ENCODE measurements at regions of chr11 and their contacts with region 1.

Region 1: DNA sequence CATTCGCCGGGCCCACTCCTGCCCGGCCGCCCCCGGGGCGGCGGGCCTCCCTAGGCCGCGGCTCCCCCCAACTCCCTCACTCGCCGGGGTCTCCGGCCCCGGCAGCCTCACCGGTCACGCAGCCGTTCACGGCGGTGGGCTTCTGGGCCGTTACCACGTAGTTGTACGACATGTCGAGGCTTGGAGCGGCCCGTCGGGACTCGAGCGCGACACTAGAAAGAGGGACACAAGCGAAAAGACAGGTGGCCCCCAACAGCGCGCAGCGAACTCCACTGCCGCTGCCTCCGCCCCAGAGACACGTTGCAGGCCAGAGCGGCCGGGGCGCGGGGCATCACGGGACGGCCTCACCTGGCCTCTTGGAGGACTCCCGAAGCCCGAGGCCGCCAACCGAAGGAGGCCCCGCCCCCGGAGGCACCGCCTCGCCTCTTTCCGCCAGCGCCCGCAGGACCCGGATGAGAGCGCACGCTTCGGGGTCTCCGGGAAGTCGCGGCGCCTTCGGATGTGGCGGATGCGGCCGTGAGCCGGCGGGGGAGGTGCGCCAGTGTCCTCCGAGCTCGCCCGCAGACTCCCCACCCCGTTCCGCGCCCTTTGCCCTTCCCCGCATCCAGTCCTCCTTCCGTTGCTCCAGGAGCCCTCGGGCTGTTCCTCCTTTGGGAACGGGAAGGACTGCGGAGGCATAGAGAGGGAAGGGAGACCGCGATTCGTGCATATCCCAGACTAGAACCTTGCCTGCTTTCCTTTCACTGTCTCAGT is at the starts of genes DDB1 and TKFC:
- DNase-seq: peak; percentile 97
- H3K4me3 Mint-ChIP-seq: peak within 1 kb of the TSS; percentile 97
- H3K27ac Mint-ChIP-seq: peak within 1 kb of the TSS; percentile 99
- H3K4me1 Mint-ChIP-seq: peaks cover 72% of the 10 kb centered on the region
- H3K27me3 Mint-ChIP-seq: no peaks in the 10 kb centered on the region
- total RNA-seq, gene DDB1: 207 to 222 TPM
- total RNA-seq, gene TKFC: 40.0 to 46.9 TPM

Region 2: DNA sequence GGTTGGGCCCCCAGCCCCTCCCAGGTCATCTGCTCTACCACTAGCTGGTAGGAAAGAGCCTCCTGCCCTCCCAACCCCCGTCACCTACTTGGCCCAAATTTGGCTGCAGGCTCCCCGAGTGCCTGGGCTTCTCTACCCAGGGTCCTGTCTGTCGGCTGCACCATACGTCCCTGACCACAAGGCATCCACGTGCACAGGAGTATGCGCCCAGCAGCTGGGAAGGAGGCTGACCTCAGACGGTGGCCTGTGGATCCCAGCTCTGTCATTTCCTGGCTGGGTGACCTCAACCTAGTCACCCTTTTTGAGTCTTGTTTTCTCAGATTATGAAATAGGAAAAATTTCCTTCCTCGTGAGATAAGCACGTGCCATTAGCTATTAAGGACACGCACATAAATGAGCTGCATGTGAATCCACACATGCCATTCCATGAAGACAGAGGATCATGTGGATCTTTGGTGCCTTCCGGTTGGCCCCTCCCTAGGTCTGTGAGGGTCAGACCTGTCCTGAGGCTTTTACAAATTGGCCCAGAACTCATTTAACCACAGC is 15.0 kb after region 1 on chr11:
- CTCF ChIA-PET with region 1: interaction called, 16 read pairs
- POLR2A ChIA-PET with region 1: interaction called, 5 read pairs
- DNase-seq: no peak
- H3K4me3 Mint-ChIP-seq: no peak overlapping the region
- H3K27ac Mint-ChIP-seq: no peak overlapping the region
- H3K4me1 Mint-ChIP-seq: peaks cover 4% of the 10 kb centered on the region
- H3K27me3 Mint-ChIP-seq: no peaks in the 10 kb centered on the region

Region 3: GRCh38 chr11:61353131-61354067 is 20.4 kb after region 1 on chr11:
- CTCF ChIA-PET with region 1: interaction called, 33 read pairs
- POLR2A ChIA-PET with region 1: interaction called, 5 read pairs
- DNase-seq: no peak
- H3K4me3 Mint-ChIP-seq: no peak overlapping the region
- H3K27ac Mint-ChIP-seq: no peak overlapping the region
- H3K4me1 Mint-ChIP-seq: peaks cover 11% of the 10 kb centered on the region
- H3K27me3 Mint-ChIP-seq: no peaks in the 10 kb centered on the region

Region 4: DNA sequence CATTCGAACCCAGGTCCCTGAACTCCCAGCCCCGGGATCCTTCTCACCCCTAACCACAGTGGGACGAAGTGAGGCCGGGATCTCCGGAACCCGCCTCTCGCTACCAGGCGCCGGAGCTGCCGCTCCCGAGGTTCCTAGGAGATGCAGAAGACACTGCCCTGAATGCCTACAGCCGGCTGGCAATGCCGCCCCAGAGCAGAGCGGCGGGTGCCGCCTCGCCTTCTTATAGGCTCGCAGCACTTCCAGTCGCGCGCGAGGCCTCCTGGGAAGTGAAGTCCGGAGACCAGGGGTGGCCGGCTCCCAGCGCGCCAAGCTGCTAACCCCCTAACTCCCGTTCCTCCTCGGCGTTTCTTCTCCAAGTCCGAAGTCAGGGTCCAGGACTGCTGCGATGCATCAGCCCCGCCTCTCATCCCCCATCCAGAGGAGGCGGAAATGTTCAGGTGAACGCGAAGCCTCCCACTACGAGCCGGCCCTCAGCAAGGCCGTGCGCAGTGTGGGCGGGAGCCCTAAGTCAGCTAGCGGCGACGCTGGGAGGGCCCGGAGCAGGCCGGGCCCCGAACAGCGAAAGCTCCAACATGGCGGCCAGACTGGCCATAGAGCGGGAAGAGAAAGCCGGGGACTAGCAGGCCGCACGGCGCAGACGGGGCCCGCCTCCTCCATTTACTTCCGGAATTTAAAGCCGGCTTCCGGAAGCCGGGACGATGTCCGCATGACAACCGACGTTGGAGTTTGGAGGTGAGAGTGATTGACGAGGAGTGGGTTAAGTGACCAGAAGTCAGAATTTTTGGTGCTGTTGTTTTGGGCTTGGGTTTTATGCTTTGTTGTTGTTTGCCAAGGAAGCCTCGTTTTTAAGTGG is 28.9 kb after region 1 on chr11 and contains the starts of genes CYB561A3 and TMEM138:
- CTCF ChIA-PET with region 1: interaction called, 53 read pairs
- POLR2A ChIA-PET with region 1: interaction called, 8 read pairs
- DNase-seq: peak; percentile 93
- H3K4me3 Mint-ChIP-seq: peak within 1 kb of the TSS; percentile 100
- H3K27ac Mint-ChIP-seq: peak within 1 kb of the TSS; percentile 99
- H3K4me1 Mint-ChIP-seq: peaks cover 45% of the 10 kb centered on the region
- H3K27me3 Mint-ChIP-seq: no peaks in the 10 kb centered on the region
- total RNA-seq, gene CYB561A3: 49.4 to 59.6 TPM
- total RNA-seq, gene TMEM138: 52.0 to 60.4 TPM

Region 5: DNA sequence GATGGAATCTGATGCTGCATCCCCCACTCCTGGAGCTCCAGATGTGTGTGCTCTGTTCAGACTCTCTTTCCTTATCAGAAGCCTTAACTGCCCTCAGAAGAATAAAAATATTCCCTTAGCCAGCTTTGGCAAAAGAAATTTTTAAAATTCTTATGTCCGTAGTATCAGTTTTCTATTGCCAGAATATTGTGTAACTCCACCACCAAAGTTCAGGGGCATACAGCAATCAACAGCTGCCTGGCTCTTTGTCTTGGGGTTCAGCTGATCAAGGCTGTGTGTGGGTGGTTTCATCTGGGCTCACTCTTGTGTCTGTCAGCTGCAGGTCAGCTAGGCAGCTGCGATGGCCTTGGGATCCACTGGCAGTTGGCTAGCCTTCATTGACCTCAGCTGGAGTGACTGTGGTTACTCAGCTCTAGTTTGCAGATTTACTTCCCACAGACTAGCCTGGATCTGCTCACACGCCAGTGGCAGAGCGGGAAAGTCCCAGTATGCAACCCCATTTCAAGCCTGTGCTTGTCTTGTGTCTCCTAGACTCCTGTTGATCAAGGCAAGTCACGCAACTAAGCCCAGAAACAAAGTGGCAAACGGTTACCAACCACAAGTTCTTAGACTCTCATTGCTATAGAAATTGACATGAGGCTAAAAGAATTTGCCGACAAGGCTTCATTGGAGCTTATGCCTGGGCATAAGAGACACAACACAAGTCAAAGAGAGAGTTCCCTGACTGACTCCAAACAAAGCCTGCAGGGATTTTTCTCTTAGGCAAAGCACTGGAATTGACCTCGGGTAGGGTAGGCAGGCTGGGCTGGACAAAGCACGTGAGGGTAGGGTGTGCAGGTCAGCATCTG is 36.6 kb after region 1 on chr11:
- CTCF ChIA-PET with region 1: interaction called, 11 read pairs
- POLR2A ChIA-PET with region 1: no interaction called
- DNase-seq: no peak
- H3K4me3 Mint-ChIP-seq: no peak overlapping the region
- H3K27ac Mint-ChIP-seq: peak overlapping the region; percentile 5
- H3K4me1 Mint-ChIP-seq: peaks cover 12% of the 10 kb centered on the region
- H3K27me3 Mint-ChIP-seq: no peaks in the 10 kb centered on the region

Region 6: GRCh38 chr11:61384271-61385242 is 51.6 kb after region 1 on chr11:
- CTCF ChIA-PET with region 1: interaction called, 88 read pairs
- POLR2A ChIA-PET with region 1: interaction called, 4 read pairs
- DNase-seq: no peak
- H3K4me3 Mint-ChIP-seq: no peak overlapping the region
- H3K27ac Mint-ChIP-seq: no peak overlapping the region
- H3K4me1 Mint-ChIP-seq: peaks cover 5% of the 10 kb centered on the region
- H3K27me3 Mint-ChIP-seq: no peaks in the 10 kb centered on the region

Region 7: DNA sequence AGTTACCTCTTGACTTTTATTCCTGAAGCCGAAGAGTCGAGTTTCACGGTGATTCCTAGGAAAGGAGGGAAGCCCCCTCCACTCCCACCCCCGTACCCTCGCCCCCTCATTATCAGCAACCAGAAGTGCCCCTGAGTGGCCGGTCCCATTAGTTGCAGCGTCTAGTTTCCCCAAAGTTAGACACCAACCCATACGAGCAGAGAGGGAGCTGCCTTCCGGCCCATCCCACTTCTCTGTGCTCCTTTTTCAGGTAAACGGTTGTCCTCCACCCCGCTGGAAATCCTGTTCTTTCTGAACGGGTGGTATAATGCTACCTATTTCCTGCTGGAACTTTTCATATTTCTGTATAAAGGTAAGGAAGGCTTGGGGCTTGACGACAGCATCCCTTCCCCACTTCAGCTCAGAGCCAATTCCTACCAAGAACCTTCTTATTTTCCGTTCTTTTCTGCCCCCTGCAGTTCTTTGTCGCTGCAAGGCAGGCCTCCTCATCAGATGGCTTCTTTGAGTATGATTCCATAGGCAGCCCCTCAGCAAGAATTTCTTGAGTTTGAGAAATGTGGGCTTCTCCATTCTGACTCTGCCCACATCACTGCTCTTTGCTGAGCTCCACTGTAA is 60.1 kb after region 1 on chr11:
- CTCF ChIA-PET with region 1: interaction called, 88 read pairs
- POLR2A ChIA-PET with region 1: interaction called, 4 read pairs
- DNase-seq: no peak
- H3K4me3 Mint-ChIP-seq: peak overlapping the region; percentile 78
- H3K27ac Mint-ChIP-seq: peak overlapping the region; percentile 92
- H3K4me1 Mint-ChIP-seq: peaks cover 25% of the 10 kb centered on the region
- H3K27me3 Mint-ChIP-seq: no peaks in the 10 kb centered on the region

Measured in activated CD4-positive, alpha-beta T cell treated with anti-CD3 and anti-CD28 coated beads, Interleukin-2, amount 10 ng/mL, durations not matched to agents 7 days and 5 days (primary cell).